ENCODE measurements at regions of chr4 and their contacts with region 1.

Region 1: GRCh38 chr4:120801137-120801758 is 121.3 kb downstream of the PRDM5 start:
- DNase-seq: peak in 1 of 2 experiments; percentile 11
- H3K4me3 ChIP-seq: no peak overlapping the region
- H3K4me3 Mint-ChIP-seq: no peak overlapping the region
- H3K27ac Mint-ChIP-seq: no peak overlapping the region
- H3K4me1 ChIP-seq: no peaks in the 10 kb centered on the region
- H3K4me1 Mint-ChIP-seq: no peaks in the 10 kb centered on the region
- H3K27me3 ChIP-seq: no peaks in the 10 kb centered on the region
- H3K27me3 Mint-ChIP-seq: no peaks in the 10 kb centered on the region
- CTCF ChIP-seq: no peak

Region 2: GRCh38 chr4:120749445-120750151 is 51.6 kb before region 1 on chr4:
- CTCF ChIA-PET with region 1: no interaction called
- POLR2A ChIA-PET with region 1: no interaction called
- intact Hi-C with region 1: no loop called
- DNase-seq: no peak
- H3K4me3 ChIP-seq: no peak overlapping the region
- H3K4me3 Mint-ChIP-seq: no peak overlapping the region
- H3K27ac Mint-ChIP-seq: no peak overlapping the region
- H3K4me1 ChIP-seq: peaks cover 7% of the 10 kb centered on the region
- H3K4me1 Mint-ChIP-seq: no peaks in the 10 kb centered on the region
- H3K27me3 ChIP-seq: no peaks in the 10 kb centered on the region
- H3K27me3 Mint-ChIP-seq: no peaks in the 10 kb centered on the region
- CTCF ChIP-seq: no peak

Region 3: GRCh38 chr4:120824946-120825345 is 23.7 kb after region 1 on chr4:
- CTCF ChIA-PET with region 1: no interaction called
- POLR2A ChIA-PET with region 1: no interaction called
- intact Hi-C with region 1: loop called (anchors 2 kb)
- DNase-seq: peak; percentile 10 to 38
- H3K4me3 ChIP-seq: no peak overlapping the region
- H3K4me3 Mint-ChIP-seq: no peak overlapping the region
- H3K27ac Mint-ChIP-seq: no peak overlapping the region
- H3K4me1 ChIP-seq: peaks cover 22% of the 10 kb centered on the region
- H3K4me1 Mint-ChIP-seq: peaks cover 14% of the 10 kb centered on the region
- H3K27me3 ChIP-seq: no peaks in the 10 kb centered on the region
- H3K27me3 Mint-ChIP-seq: no peaks in the 10 kb centered on the region
- CTCF ChIP-seq: no peak